PC-3 (cell line): ENCODE measurements at regions of chr16 and their contacts with region 1.

Region 1: DNA sequence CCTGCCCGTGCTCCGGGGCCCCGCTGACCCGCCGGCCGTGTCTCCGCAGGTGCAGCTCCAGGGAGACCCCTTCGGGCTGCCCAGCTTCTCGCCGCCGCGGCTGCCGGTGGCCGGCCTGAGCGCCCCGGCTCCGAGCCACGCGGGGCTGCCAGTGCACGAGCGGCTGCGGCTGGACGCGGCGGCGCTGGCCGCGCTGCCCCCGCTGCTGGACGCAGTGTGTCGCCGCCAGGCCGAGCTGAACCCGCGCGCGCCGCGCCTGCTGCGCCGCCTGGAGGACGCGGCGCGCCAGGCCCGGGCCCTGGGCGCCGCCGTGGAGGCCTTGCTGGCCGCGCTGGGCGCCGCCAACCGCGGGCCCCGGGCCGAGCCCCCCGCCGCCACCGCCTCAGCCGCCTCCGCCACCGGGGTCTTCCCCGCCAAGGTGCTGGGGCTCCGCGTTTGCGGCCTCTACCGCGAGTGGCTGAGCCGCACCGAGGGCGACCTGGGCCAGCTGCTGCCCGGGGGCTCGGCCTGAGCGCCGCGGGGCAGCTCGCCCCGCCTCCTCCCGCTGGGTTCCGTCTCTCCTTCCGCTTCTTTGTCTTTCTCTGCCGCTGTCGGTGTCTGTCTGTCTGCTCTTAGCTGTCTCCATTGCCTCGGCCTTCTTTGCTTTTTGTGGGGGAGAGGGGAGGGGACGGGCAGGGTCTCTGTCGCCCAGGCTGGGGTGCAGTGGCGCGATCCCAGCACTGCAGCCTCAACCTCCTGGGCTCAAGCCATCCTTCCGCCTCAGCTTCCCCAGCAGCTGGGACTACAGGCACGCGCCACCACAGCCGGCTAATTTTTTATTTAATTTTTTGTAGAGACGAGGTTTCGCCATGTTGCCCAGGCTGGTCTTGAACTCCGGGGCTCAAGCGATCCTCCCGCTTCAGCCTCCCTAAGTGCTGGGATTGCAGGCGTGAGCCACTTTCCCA is 5.9 kb downstream of the CTF1 start:
- DNase-seq: peak; percentile 62
- ATAC-seq: peak; percentile 96
- H3K4me3 ChIP-seq: peak overlapping the region; percentile 69
- H3K27ac ChIP-seq: no peak overlapping the region
- H3K4me1 ChIP-seq: peaks cover 2% of the 10 kb centered on the region; the same call in 1 of the 2 replicates
- H3K27me3 ChIP-seq: no peaks in the 10 kb centered on the region
- CTCF ChIP-seq: no peak

Region 2: DNA sequence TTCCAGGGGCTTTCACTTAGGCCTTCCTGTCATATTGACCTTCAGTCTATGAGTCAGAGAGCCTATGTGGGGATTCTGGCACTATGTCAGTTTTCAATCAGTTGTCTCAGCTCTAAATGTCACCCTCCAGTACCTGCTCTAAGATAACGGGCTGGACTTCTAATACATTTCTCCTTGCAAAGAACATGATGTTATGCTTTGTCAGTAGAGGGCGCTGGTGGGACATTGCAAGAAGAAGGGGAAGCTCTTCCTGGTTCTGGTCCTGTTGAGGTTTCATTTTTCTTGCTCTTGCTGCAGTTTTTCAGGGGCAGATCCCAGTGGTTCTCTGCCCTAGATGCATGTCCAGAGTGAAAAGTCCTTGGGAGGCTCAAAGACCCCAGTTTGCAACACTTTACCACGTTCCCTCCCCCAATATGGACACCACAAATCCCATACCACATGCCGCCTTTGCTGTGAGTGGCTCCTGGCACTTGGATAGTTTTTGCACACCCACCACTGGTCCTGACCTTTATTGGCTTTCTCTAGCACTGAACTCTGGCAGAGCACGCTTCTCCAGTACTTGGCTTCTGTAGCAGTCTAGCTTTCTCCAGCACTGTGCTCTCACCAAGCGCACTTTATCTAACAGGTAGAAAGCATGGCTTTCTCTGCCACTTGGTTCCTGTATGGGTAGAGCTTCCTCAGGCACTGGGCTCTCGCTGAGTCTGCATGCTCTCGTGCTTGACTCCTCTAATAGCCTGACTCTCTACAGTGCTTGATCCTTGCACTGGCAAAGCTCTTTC is 57.4 kb before region 1 on chr16:
- CTCF ChIA-PET with region 1: interaction called, 25 read pairs
- POLR2A ChIA-PET with region 1: interaction called, 4 read pairs
- intact Hi-C with region 1: loop called (anchors 2 kb)
- DNase-seq: peak; percentile 81
- ATAC-seq: peak; percentile 91
- H3K4me3 ChIP-seq: peak overlapping the region; percentile 41; the same call in 1 of the 2 replicates
- H3K27ac ChIP-seq: no peak overlapping the region
- H3K4me1 ChIP-seq: 0 out of 2 replicates have a peak, but pooled peaks cover 3% of the 10 kb centered on the region
- H3K27me3 ChIP-seq: no peaks in the 10 kb centered on the region
- CTCF ChIP-seq: peak; percentile 87